ENCODE measurements at regions of chr5 and their contacts with region 1.

Region 1: GRCh38 chr5:98954392-98955028 is 25.7 kb upstream of the CHD1 start:
- DNase-seq: no peak
- ATAC-seq: no peak
- H3K4me3 ChIP-seq: no peak overlapping the region
- H3K27ac ChIP-seq: no peak overlapping the region
- H3K4me1 ChIP-seq: peaks cover 0 to 4% (median 0%) of the 10 kb centered on the region in 9 donors
- H3K27me3 ChIP-seq: no peaks in the 10 kb centered on the region
- CTCF ChIP-seq: no peak

Region 2: DNA sequence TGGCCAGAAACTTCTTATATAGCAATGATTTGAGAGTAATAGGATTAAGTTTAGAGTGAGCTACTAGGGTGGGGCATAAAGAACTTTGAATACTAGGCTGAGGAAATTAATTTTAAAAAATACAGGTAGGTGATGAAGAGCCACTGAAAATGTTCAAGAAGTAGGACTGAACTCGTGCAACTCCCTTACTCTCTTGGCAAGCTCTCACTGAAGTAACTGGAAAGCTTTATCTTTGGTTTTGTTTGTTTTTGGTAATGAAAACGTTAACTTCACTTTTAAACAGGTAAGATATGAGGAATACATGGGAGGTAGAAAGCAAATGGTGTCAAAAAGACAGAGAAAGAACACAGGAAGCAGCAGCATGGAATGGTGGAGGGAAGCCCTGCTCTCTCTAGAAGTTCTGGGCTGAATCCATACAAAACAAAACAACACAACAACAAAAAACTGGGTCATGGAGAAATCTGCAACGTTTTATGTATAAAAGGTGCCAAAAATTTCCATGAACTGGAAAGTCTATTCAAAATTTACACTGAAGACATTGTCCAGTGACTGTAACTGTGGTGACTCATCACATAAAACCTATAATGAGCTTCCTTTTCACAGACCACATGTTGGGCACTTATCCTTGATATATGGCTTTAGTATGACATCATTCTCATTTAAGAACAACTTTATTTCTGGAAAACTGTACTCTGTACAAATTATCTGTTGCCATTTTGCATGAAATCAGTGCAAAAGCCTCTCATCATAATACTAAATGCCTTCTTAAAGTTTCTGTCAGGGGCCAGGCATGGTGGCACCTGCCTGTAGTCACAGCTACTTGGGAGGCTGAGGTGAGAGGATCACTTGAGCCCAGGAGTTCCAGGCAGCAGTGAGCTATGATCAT is 65.5 kb after region 1 on chr5:
- intact Hi-C with region 1: loop called in 1 of 10 experiments (anchors 10 kb)
- DNase-seq: no peak
- ATAC-seq: peak in 1 of 8 donors; percentile 55
- H3K4me3 ChIP-seq: no peak overlapping the region
- H3K27ac ChIP-seq: no peak overlapping the region
- H3K4me1 ChIP-seq: peaks cover 0 to 20% (median 0%) of the 10 kb centered on the region in 9 donors
- H3K27me3 ChIP-seq: no peaks in the 10 kb centered on the region
- CTCF ChIP-seq: no peak

Region 3: DNA sequence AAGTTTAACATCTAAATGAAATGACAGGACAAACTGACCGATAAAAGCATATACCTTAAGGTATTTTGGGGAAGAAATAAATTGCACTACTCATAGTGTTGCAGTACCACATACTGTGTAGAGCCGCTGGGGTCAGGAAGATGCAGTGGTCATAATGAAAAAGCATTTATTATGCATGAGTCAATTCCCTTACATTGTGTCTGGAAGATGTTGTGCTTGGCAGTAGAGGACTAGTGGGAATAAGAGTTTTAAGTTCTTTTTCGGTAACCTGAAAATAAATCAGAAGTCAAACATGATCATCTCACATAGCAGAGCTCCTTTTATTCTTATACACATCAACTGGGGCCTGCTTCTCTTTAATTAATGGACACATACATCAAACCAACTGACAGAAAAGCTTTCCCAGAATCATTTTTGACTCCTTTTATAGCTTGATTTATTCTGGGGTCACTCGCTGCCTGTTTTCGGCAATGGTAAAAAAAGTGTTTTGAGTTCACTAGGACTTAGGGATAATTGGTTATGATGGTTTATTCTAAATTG is 236.8 kb after region 1 on chr5:
- intact Hi-C with region 1: no loop called
- DNase-seq: no peak
- ATAC-seq: no peak
- H3K4me3 ChIP-seq: no peak overlapping the region
- H3K27ac ChIP-seq: no peak overlapping the region
- H3K4me1 ChIP-seq: no peaks in the 10 kb centered on the region
- H3K27me3 ChIP-seq: no peaks in the 10 kb centered on the region
- CTCF ChIP-seq: no peak